ENCODE measurements at regions of chr3 and their contacts with region 1.

Region 1: DNA sequence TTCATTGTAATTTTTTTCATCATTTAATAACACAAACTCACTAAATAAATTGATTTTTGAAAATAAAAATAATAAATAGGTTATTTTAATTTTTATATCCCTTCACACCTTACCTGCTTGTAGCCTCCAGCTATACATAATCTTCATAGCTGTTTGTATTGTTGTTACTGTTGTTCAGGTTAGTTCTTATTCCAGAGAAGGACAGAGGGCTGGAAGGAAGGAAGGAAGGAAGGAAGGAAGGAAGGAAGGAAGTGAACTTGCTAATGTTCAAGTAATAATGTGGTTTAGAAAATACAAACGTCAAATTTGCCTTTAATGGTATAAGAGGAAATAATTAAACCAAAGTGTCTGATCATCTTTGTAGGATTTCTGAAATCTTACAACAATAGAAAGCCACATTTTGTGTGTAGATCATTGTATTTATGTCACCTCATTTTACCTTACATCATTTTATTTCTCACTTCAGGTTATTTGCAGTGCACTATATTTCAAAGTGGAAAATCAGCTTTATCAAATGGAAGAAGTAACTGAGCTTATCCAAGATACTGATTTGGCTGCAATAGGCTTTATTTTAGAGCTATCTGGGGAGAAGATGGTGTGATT is 660.0 kb upstream of the CCDC54 start:
- DNase-seq: peak; percentile 98
- H3K4me3 ChIP-seq: no peak overlapping the region
- H3K27ac ChIP-seq: peak overlapping the region; percentile 99
- H3K4me1 ChIP-seq: peaks cover 38% of the 10 kb centered on the region
- H3K27me3 ChIP-seq: no peaks in the 10 kb centered on the region
- CTCF ChIP-seq: no peak

Region 2: DNA sequence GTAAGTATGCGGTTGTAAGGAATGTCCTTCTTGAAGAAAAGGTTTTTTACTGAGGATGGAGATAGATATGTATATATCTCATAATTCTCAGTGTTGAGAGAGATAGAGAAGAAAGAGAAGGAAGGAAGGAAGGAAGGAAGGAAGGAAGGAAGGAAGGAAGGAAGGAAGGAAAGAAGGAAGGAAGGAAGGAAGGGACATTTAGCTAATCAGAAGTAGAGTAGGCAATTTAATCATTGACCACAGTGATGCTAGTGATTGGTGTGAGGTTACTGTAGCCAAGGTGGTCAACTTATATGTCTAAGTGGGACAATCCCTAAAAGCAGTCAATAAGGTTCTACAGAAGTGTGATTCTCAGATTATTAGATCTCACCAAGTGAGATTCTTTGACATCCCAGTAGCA is 96.6 kb before region 1 on chr3:
- CTCF ChIA-PET with region 1: no interaction called
- POLR2A ChIA-PET with region 1: interaction called, 7 read pairs
- intact Hi-C with region 1: loop called (anchors 1 kb)
- DNase-seq: peak; percentile 83
- H3K4me3 ChIP-seq: no peak overlapping the region
- H3K27ac ChIP-seq: peak overlapping the region; percentile 88
- H3K4me1 ChIP-seq: peaks cover 13% of the 10 kb centered on the region
- H3K27me3 ChIP-seq: no peaks in the 10 kb centered on the region
- CTCF ChIP-seq: no peak

Region 3: GRCh38 chr3:106629215-106629832 is 88.0 kb before region 1 on chr3:
- CTCF ChIA-PET with region 1: interaction called, 3 read pairs
- POLR2A ChIA-PET with region 1: interaction called, 8 read pairs
- intact Hi-C with region 1: loop called (anchors 1 kb)
- DNase-seq: peak; percentile 96
- H3K4me3 ChIP-seq: no peak overlapping the region
- H3K27ac ChIP-seq: peak overlapping the region; percentile 90
- H3K4me1 ChIP-seq: peaks cover 45% of the 10 kb centered on the region
- H3K27me3 ChIP-seq: no peaks in the 10 kb centered on the region
- CTCF ChIP-seq: no peak

Region 4: DNA sequence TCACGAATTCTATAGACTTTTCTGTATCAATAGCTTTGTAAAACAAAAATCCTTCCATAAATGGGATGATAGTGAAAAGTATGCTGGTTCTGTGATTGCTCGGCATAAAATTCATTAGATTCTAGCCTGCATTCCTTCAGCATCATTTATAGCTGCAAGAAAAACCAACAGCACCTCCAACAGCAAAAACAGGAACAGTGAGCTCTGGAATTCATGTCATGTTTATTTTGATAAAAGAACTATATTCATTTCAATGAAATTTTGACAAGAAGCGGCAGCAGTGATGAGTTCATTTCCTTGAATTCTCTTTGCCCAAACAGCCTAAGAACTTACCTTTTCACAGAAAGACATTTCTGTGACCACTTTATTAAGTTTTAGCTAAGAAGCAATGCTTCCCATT is 144.8 kb after region 1 on chr3:
- CTCF ChIA-PET with region 1: interaction called, 9 read pairs
- POLR2A ChIA-PET with region 1: interaction called, 3 read pairs
- intact Hi-C with region 1: loop called (anchors 1 kb)
- DNase-seq: peak; percentile 70
- H3K4me3 ChIP-seq: no peak overlapping the region
- H3K27ac ChIP-seq: peak overlapping the region; percentile 76
- H3K4me1 ChIP-seq: peaks cover 20% of the 10 kb centered on the region
- H3K27me3 ChIP-seq: no peaks in the 10 kb centered on the region
- CTCF ChIP-seq: peak; percentile 55; the same call in 1 of the 2 replicates

Region 5: DNA sequence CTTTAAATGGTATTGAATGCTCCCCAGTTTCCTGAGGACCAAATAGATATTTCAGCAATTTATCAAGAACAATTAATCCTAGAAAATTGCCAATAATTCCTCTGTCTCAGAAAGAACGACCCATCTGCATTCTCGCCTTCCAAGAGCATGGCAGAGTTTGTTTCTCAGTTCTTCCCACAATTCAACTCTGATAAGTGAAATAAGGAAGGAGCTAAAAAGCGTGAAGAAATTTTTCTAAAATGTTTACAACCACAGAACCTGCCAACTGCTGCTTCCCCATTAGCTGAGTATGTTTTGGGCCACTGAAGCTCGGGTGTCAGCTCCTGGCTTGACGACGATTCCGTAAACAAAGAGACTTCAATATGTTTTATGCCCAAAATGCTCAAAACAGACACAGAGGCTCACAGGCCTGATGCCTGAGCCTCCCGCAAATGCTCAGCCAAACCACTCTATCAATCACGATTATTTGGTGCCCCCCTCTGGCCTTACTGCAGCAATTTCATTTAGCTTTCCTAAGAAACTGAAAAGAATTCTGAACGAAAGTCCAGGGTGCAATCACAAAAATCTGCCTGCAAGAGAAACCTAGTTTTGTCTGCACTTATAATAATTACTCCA is 400.8 kb after region 1 on chr3:
- CTCF ChIA-PET with region 1: interaction called, 10 read pairs
- POLR2A ChIA-PET with region 1: interaction called, 17 read pairs
- intact Hi-C with region 1: loop called (anchors 1 kb)
- DNase-seq: peak; percentile 93
- H3K4me3 ChIP-seq: no peak overlapping the region
- H3K27ac ChIP-seq: peak overlapping the region; percentile 59
- H3K4me1 ChIP-seq: peaks cover 17% of the 10 kb centered on the region
- H3K27me3 ChIP-seq: no peaks in the 10 kb centered on the region
- CTCF ChIP-seq: peak; percentile 86